ENCODE measurements at regions of chr2 and their contacts with region 1.

Region 1: GRCh38 chr2:42974721-42975717 is 182.6 kb upstream of the HAAO start:
- DNase-seq: peak; percentile 76
- H3K4me3 ChIP-seq: peak overlapping the region; percentile 41
- H3K27ac ChIP-seq: no peak overlapping the region
- H3K4me1 ChIP-seq: no peaks in the 10 kb centered on the region
- H3K27me3 ChIP-seq: no peaks in the 10 kb centered on the region
- CTCF ChIP-seq: peak; percentile 95

Region 2: GRCh38 chr2:43018179-43019024 is 43.4 kb after region 1 on chr2:
- CTCF ChIA-PET with region 1: no interaction called
- POLR2A ChIA-PET with region 1: no interaction called
- intact Hi-C with region 1: no loop called
- DNase-seq: peak; percentile 7
- H3K4me3 ChIP-seq: no peak overlapping the region
- H3K27ac ChIP-seq: no peak overlapping the region
- H3K4me1 ChIP-seq: no peaks in the 10 kb centered on the region
- H3K27me3 ChIP-seq: no peaks in the 10 kb centered on the region
- CTCF ChIP-seq: no peak

Region 3: DNA sequence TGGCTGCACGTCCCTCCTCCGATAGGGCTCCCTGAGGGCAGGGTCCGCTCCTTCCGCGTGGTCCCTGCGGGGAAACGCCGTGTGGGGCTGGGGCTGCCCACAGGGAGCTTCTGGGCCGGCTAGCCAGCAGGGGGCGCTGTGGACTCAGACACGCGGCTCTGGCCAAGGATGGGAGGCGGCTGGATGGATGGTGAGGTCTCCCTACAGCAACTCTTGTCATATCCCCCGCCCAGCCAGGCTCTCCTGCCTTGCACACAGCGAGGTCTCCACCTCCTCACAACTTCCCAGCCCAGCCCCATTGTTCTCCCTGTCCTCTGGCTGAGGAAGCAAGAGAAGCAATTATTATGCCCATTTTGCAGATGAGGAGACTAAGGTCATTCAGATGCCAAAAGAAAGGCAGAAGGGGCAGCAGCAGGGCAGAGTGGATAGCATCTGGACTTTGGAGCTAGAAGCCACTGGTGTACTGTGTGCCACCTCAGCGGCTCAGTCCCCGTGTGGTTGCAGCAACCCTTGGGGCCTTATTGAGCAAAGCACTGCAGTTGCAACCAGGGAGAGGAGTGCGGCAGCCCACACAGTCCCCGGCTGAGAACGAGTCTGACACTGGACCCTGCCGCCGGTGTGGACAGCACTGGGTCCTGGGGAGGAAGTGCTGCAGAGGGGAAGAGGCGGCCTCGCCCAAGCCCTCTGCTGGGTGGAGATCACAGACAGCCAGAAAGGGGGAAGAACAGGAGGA is 152.4 kb after region 1 on chr2:
- CTCF ChIA-PET with region 1: no interaction called
- POLR2A ChIA-PET with region 1: no interaction called
- intact Hi-C with region 1: loop called (anchors 10 kb)
- DNase-seq: peak; percentile 68
- H3K4me3 ChIP-seq: no peak overlapping the region
- H3K27ac ChIP-seq: no peak overlapping the region
- H3K4me1 ChIP-seq: no peaks in the 10 kb centered on the region
- H3K27me3 ChIP-seq: no peaks in the 10 kb centered on the region
- CTCF ChIP-seq: peak; percentile 82

Region 4: GRCh38 chr2:43542285-43542937 is 567.4 kb after region 1 on chr2:
- CTCF ChIA-PET with region 1: interaction called, 3 read pairs
- POLR2A ChIA-PET with region 1: no interaction called
- intact Hi-C with region 1: loop called (anchors 1 kb)
- DNase-seq: peak; percentile 63
- H3K4me3 ChIP-seq: no peak overlapping the region
- H3K27ac ChIP-seq: no peak overlapping the region
- H3K4me1 ChIP-seq: no peaks in the 10 kb centered on the region
- H3K27me3 ChIP-seq: no peaks in the 10 kb centered on the region
- CTCF ChIP-seq: peak; percentile 67